GM10248 (cell line): ENCODE measurements at regions of chr2 and their contacts with region 1.

Region 1: DNA sequence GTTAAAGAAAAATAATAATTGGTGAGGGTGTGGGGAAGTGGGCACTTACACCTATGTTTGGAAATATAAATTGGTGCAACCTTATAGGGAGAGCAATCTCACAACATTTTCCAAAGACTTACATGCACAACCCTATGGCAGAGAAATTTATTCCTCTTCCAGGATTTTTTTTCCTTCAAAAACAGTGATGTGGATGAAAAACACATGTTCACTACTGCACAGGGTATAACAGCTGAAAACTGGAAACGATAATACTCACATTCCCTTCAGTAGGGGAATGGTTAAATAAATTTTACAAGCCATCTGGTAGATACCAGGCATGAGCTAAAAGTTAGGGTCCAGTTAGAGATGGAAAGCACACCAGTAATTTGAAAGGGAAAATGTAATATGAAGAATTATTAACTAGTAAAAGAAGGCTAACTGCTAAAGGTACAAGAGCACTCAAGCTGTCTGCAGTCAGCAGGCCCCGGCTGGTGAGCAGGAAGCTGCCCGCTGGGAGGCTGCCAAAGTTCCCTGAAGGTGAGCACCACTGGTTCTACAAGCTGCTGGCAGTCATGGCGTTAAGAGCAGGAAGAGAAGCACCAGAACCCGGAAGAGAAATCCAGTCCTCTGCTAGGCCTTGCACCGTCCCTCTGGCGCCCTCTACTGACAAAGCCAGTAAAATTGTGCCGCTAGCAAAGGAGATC is 28.4 kb upstream of the CASP8 start:
- DNase-seq: peak; percentile 83
- CTCF ChIP-seq: peak; percentile 83

Region 2: GRCh38 chr2:200888704-200889625 is 343.0 kb before region 1 on chr2 and contains the starts of genes NIF3L1 and PPIL3:
- CTCF ChIA-PET with region 1: interaction called, 13 read pairs
- POLR2A ChIA-PET with region 1: no interaction called
- DNase-seq: peak; percentile 91
- CTCF ChIP-seq: no peak

Region 3: GRCh38 chr2:201071479-201072200 is 160.3 kb before region 1 on chr2 and contains the starts of genes HYCC2 and NDUFB3:
- CTCF ChIA-PET with region 1: interaction called, 16 read pairs
- POLR2A ChIA-PET with region 1: no interaction called
- DNase-seq: peak; percentile 96
- CTCF ChIP-seq: peak; percentile 38

Region 4: DNA sequence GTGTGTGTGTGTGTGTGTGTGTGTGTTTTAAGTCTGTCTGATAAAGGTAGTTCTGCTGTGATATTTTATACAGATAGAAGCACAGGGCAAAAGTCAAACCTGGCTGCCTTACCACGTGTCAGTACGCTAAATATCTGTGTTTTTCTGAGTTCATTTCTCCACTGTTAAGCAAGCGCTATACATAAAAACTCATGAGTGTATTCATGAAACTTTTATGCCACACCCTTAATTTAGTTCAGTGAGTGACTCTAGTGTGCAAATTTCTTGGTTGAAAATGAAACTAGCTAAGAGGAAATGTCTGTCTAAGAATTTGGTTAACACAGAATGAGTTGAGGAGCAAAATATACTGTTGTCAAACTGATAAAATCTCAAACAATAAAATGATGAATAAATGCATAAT is 37.8 kb before region 1 on chr2:
- CTCF ChIA-PET with region 1: interaction called, 28 read pairs
- POLR2A ChIA-PET with region 1: interaction called, 3 read pairs
- DNase-seq: peak; percentile 73
- CTCF ChIP-seq: no peak

Region 5: DNA sequence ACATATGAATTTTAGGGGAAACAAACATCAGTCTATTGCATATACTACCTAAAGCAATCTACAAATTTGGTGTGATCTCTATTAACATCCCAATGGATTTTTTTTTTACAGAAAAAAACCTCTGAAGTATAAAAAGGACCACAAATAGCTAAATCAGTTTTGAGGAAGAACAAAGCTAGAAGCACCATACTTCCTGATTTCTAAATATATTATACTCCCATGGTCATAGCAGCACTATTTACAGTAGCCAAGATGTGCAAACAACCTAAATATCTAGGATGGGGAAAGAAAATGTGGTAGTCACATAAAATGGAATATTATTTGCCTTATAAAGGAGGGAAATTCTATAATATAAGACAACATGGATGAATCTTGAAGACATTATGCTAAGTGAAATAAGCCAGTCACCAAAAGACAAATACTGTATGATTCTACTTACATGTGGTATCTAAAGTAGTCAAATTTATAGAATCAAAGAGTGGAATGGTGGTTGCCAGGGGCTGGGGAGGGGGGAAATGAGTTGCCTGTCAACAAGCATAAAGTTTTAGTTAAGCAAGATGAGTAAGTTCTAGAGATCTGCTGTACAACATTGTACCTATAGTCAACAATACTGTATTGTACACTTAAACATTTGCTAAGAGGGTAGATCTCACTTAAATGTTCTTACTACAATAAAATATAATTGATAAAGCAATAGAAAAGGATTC is 10.8 kb after region 1 on chr2:
- CTCF ChIA-PET with region 1: interaction called, 24 read pairs
- POLR2A ChIA-PET with region 1: no interaction called
- DNase-seq: no peak
- CTCF ChIP-seq: no peak

Region 6: GRCh38 chr2:201263779-201264178 is 31.9 kb after region 1 on chr2:
- CTCF ChIA-PET with region 1: interaction called, 21 read pairs
- POLR2A ChIA-PET with region 1: interaction called, 4 read pairs
- DNase-seq: no peak
- CTCF ChIP-seq: no peak

Region 7: GRCh38 chr2:201451292-201452057 is 219.6 kb after region 1 on chr2 and contains the starts of genes STRADB and TRAK2:
- CTCF ChIA-PET with region 1: interaction called, 23 read pairs
- POLR2A ChIA-PET with region 1: interaction called, 3 read pairs
- DNase-seq: peak; percentile 98
- CTCF ChIP-seq: peak; percentile 17